ENCODE measurements at regions of chr19 and their contacts with region 1.

Region 1: GRCh38 chr19:29858000-29858596 is 46.3 kb downstream of the CCNE1 start:
- DNase-seq: peak; percentile 80
- ATAC-seq: peak; percentile 89
- H3K4me3 Mint-ChIP-seq: no peak overlapping the region
- H3K27ac Mint-ChIP-seq: no peak overlapping the region
- H3K4me1 Mint-ChIP-seq: peaks cover 13% of the 10 kb centered on the region
- H3K27me3 Mint-ChIP-seq: no peaks in the 10 kb centered on the region
- CTCF ChIP-seq: peak; percentile 74; the same call in 1 of the 2 replicates

Region 2: GRCh38 chr19:29735800-29736199 is 122.3 kb before region 1 on chr19:
- CTCF ChIA-PET with region 1: interaction called, 12 read pairs
- POLR2A ChIA-PET with region 1: no interaction called
- DNase-seq: no peak
- ATAC-seq: no peak
- H3K4me3 Mint-ChIP-seq: no peak overlapping the region
- H3K27ac Mint-ChIP-seq: no peak overlapping the region
- H3K4me1 Mint-ChIP-seq: no peaks in the 10 kb centered on the region
- H3K27me3 Mint-ChIP-seq: no peaks in the 10 kb centered on the region
- CTCF ChIP-seq: no peak

Region 3: DNA sequence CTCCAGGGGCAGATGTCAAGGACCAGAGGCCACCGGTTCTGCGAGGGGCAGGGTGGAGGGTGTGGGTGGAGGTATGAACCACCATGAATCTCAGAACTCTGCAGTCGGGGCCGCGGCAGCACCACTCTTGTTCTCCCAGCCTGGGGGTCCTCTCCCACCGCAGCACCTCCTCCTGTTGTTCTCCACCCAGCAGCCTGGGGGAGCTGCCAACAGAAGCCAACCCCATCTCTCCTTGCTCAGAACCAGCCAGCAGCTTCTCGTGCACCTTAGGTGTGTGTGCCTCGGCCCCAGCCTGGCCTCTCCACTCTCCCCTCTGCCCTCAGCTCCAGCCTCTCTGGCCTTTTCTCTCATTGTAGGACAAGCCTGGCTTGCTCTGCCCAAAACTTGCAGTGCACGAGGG is 78.2 kb before region 1 on chr19:
- CTCF ChIA-PET with region 1: interaction called, 13 read pairs
- POLR2A ChIA-PET with region 1: no interaction called
- DNase-seq: peak; percentile 51
- ATAC-seq: peak; percentile 88
- H3K4me3 Mint-ChIP-seq: no peak overlapping the region
- H3K27ac Mint-ChIP-seq: peak overlapping the region; percentile 41; the same call in 1 of the 2 replicates
- H3K4me1 Mint-ChIP-seq: peaks cover 11% of the 10 kb centered on the region
- H3K27me3 Mint-ChIP-seq: no peaks in the 10 kb centered on the region; the same call in 1 of the 2 replicates
- CTCF ChIP-seq: no peak

Region 4: GRCh38 chr19:29823581-29824325 is 34.3 kb before region 1 on chr19:
- CTCF ChIA-PET with region 1: interaction called, 10 read pairs
- POLR2A ChIA-PET with region 1: interaction called, 3 read pairs
- DNase-seq: no peak
- ATAC-seq: no peak
- H3K4me3 Mint-ChIP-seq: no peak overlapping the region
- H3K27ac Mint-ChIP-seq: no peak overlapping the region
- H3K4me1 Mint-ChIP-seq: no peaks in the 10 kb centered on the region
- H3K27me3 Mint-ChIP-seq: no peaks in the 10 kb centered on the region
- CTCF ChIP-seq: no peak

Region 5: DNA sequence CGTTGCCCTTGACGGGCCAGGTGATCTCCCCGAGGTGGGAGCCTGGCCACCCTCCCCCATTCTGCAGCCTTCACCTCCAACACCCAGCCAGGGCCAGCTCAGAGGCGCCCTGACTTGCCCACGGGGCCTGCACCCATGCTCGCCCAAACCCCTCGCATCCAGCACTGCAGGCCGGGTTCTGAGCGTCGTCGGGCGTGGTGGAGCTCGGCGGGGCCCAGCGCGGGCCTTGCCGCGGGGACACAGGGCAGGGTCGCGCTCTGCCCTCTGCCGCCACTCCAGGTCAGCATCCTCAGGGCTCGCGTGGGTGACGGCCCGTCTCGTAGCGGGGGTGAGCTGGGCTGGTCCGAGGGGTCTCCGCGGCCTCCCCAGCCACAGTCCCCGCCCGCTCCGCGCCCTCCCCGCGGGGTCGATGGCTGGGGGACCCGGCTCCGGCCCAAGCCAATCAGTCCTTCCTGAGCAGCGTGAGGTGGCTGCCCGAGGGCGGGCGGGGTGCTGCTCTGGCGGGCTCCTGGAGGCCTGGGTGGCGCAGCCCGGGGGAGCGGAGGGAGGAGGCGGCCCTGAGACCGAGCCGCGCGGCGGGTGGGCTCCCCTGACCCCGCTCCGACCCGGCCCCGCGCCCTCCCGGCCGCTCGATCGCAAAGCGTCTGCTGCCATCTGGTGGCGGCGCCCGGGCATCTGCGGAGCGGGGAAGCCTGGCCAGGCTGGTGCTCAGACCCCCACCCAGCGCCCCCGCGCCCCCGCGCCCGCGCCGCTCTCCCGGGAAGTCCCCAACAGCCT is 15.1 kb after region 1 on chr19:
- CTCF ChIA-PET with region 1: interaction called, 141 read pairs
- POLR2A ChIA-PET with region 1: no interaction called
- DNase-seq: peak; percentile 85
- ATAC-seq: peak; percentile 81
- H3K4me3 Mint-ChIP-seq: peak overlapping the region; percentile 73
- H3K27ac Mint-ChIP-seq: no peak overlapping the region
- H3K4me1 Mint-ChIP-seq: peaks cover 2% of the 10 kb centered on the region; the same call in 1 of the 2 replicates
- H3K27me3 Mint-ChIP-seq: peaks cover 26% of the 10 kb centered on the region
- CTCF ChIP-seq: peak; percentile 72

Region 6: DNA sequence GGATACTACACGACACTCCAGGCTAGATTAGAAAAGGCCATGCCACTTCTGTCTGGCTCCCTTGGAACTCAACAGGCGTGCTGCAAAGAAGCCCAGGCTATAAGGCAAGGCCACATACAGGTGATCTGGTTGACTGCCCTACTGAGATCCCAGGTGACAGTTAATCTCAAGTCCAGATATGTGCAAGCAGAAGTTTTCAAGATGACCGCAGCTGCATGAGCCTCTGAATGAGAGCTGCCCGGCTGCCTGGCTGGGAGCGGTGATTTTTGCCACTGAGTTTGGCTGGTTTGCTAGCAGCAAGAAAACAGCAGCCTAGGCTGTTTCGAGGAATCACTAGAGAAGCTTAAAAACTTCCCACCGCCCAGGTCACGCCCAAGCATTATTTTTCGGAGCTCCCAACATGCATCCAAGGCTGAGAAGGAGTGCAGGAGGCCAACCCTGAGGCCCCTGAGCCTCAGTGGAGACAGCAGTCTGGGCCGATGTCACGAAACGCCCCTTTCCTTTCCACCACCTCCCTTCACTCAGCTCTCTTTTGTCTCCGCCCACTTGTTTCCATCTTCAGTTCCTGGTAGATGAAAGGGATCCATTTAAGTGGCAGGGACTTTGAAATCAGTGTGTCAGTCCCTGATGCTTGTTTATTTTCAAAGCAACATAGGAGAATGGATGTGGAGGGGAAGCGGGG is 70.0 kb after region 1 on chr19:
- CTCF ChIA-PET with region 1: no interaction called
- POLR2A ChIA-PET with region 1: no interaction called
- DNase-seq: peak; percentile 19
- ATAC-seq: peak; percentile 91
- H3K4me3 Mint-ChIP-seq: no peak overlapping the region
- H3K27ac Mint-ChIP-seq: no peak overlapping the region
- H3K4me1 Mint-ChIP-seq: peaks cover 18% of the 10 kb centered on the region
- H3K27me3 Mint-ChIP-seq: peaks cover 2% of the 10 kb centered on the region; the same call in 1 of the 2 replicates
- CTCF ChIP-seq: no peak

Region 7: GRCh38 chr19:29988351-29988750 is 130.3 kb after region 1 on chr19:
- CTCF ChIA-PET with region 1: interaction called, 11 read pairs
- POLR2A ChIA-PET with region 1: no interaction called
- DNase-seq: peak; percentile 51
- ATAC-seq: peak; percentile 92
- H3K4me3 Mint-ChIP-seq: no peak overlapping the region
- H3K27ac Mint-ChIP-seq: peak overlapping the region; percentile 17; the same call in 1 of the 2 replicates
- H3K4me1 Mint-ChIP-seq: peaks cover 29% of the 10 kb centered on the region
- H3K27me3 Mint-ChIP-seq: no peaks in the 10 kb centered on the region
- CTCF ChIP-seq: no peak

Measured in WTC11 (cell line).